Posterior vena cava (tissue), 2 donors: ENCODE measurements at regions of chr16 and their contacts with region 1.

Region 1: DNA sequence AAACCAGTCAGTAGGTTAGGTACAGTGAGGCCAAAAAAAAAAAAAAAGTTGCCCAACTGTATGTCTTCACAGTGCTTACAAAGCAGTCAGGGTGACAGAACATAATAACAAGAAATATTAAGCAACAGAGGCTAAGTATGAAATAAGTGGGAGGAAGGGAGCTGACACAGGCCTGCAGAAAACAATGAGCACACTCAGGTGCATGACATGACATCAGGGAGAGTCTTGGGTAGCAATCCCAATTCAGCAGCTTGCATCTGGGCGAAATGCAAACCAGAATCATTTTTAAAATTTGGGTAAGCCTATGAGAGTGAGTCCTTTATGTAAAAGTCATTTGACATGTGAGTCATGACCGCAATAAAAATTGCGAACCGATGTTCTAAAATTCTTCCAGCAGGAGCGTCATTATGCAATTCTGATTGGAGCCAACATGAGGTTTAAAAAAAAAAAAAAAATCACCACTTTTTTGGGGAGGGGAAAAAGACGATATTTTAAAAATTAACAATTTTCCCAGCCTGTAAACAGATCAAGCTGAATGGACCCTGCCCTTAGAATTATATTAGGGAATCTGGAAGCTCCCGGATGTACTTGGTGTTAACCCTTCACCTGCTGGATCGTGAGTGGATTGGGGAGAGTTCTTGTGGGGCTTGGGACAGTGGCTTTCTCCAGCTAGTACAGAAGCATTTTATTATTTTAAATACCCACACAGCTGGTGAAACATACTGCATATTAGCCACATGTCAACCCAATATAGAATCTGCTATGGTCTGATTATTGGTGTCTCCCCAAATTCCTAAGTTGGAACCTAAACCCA is 127.9 kb downstream of the NPIPB5 start:
- DNase-seq: no peak

Region 2: GRCh38 chr16:22797551-22797950 is 159.0 kb after region 1 on chr16:
- intact Hi-C with region 1: loop called in 1 of 2 experiments (anchors 10 kb)
- DNase-seq: no peak